ENCODE measurements at regions of chr1 and their contacts with region 1.

Region 1: DNA sequence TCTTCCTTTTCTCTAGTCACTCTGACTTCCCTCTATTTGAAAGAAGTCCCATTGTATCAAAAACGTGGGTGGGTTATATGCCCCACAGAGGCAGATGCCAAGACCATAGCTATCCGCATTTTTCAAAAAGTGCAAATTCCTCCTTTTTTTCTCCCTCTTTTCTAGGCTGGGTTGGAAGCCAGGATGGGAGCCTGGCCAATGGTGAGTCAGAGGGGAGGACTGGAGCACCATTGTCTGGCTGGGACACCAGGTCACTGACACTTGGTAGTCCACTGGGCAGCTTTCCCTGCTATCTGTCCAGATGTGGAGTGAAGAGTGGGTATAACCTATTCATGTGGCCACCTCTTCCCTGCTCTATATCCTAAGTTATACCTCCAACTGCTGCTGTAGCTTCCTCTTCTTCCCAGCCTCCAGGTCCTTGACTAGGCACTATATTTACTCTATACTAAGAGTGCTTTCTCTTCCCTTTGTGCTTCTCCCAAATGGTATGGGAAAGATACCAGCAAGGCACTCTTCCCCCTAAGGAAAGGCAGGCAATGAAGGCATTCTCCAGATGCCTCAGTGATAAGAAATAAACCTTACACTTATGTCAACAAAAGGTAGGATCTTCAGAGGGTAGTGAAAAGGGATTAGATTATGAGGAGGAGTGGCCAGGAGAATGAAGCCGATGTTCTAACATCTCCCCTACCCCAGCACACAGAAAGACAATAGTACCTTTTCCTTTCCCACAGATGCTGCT is 12.9 kb downstream of the PI4KB start:
- DNase-seq: no peak
- ATAC-seq: no peak
- H3K4me3 ChIP-seq: no peak overlapping the region
- H3K27ac ChIP-seq: no peak overlapping the region
- H3K4me1 ChIP-seq: peaks cover 16% of the 10 kb centered on the region
- H3K27me3 ChIP-seq: no peaks in the 10 kb centered on the region
- CTCF ChIP-seq: no peak

Region 2: DNA sequence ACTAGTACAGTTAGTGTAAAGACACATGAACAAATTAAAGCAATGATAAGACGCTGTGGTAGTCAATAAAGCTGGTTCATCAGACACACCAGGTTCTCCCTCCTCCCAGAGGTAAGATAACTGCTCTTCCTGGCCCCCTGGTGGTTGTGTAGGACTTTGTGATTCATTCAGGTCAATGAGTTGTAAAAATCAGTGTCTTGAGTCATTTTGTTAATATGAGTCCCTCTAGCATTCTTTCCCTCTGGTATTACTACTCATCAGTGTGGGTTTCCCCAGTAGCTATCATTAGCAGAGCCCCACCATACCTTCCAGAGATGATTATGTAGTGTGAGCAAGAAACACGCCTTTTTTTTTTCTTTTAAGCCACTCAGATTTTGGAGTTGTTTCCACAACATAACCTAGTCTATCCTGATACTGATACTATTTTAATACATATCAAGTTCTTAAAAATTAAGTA is 391.8 kb before region 1 on chr1:
- CTCF ChIA-PET with region 1: no interaction called
- POLR2A ChIA-PET with region 1: no interaction called
- in situ Hi-C with region 1: no loop called
- intact Hi-C with region 1: no loop called
- DNase-seq: peak; percentile 65
- ATAC-seq: peak; percentile 55
- H3K4me3 ChIP-seq: no peak overlapping the region
- H3K27ac ChIP-seq: no peak overlapping the region
- H3K4me1 ChIP-seq: no peaks in the 10 kb centered on the region; the same call in 1 of the 2 replicates
- H3K27me3 ChIP-seq: no peaks in the 10 kb centered on the region
- CTCF ChIP-seq: peak; percentile 86

Region 3: GRCh38 chr1:151346769-151347522 is 32.6 kb after region 1 on chr1 and contains the start of gene RFX5:
- CTCF ChIA-PET with region 1: no interaction called
- POLR2A ChIA-PET with region 1: no interaction called
- in situ Hi-C with region 1: no loop called
- intact Hi-C with region 1: loop called (anchors 1 kb)
- DNase-seq: peak; percentile 95
- ATAC-seq: peak; percentile 99
- H3K4me3 ChIP-seq: peak within 1 kb of the TSS; percentile 84 to 91
- H3K27ac ChIP-seq: peak within 1 kb of the TSS; percentile 93
- H3K4me1 ChIP-seq: peaks cover 13% of the 10 kb centered on the region; the same call in 1 of the 2 replicates
- H3K27me3 ChIP-seq: no peaks in the 10 kb centered on the region
- CTCF ChIP-seq: no peak
- total RNA-seq, gene RFX5: 75.5 TPM